H1 (cell line): ENCODE measurements at regions of chr4 and their contacts with region 1.

Region 1: DNA sequence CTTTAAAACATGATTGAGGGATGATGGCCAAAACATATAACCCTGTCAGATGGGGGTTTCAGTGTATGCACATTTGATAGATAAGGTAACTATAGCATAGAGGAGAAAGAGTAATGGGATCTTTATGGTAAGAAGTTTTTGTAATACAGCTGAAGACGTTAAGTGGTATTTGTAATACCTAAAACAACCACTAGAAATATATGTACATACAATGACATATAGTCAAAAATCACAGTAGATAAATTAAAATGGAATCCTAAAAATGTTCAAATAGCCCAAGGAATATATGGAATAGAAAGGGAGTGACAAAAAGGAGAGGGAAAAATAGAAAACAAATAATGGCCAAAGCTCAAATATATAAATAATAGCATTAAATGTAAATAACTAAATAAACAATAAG is 371.3 kb upstream of the FSTL5 start:
- DNase-seq: no peak
- H3K4me3 ChIP-seq: no peak overlapping the region
- H3K27ac ChIP-seq: no peak overlapping the region
- H3K4me1 ChIP-seq: no peaks in the 10 kb centered on the region
- H3K27me3 ChIP-seq: no peaks in the 10 kb centered on the region
- CTCF ChIP-seq: no peak
- EP300 ChIP-seq: no peak
- POLR2A ChIP-seq: no peak
- RAD21 ChIP-seq: no peak

Region 2: GRCh38 chr4:162523171-162523570 is 11.9 kb before region 1 on chr4:
- CTCF ChIA-PET with region 1: interaction called, 13 read pairs
- POLR2A ChIA-PET with region 1: no interaction called
- DNase-seq: no peak
- H3K4me3 ChIP-seq: no peak overlapping the region
- H3K27ac ChIP-seq: no peak overlapping the region
- H3K4me1 ChIP-seq: no peaks in the 10 kb centered on the region; a peak in 1 of 7 replicates
- H3K27me3 ChIP-seq: no peaks in the 10 kb centered on the region
- CTCF ChIP-seq: no peak
- EP300 ChIP-seq: no peak
- POLR2A ChIP-seq: no peak
- RAD21 ChIP-seq: no peak

Region 3: GRCh38 chr4:162586266-162586665 is 51.1 kb after region 1 on chr4:
- CTCF ChIA-PET with region 1: no interaction called
- POLR2A ChIA-PET with region 1: no interaction called
- DNase-seq: no peak
- H3K4me3 ChIP-seq: no peak overlapping the region
- H3K27ac ChIP-seq: no peak overlapping the region
- H3K4me1 ChIP-seq: no peaks in the 10 kb centered on the region
- H3K27me3 ChIP-seq: no peaks in the 10 kb centered on the region
- CTCF ChIP-seq: no peak
- EP300 ChIP-seq: no peak
- POLR2A ChIP-seq: no peak
- RAD21 ChIP-seq: no peak